ENCODE measurements at regions of chr7 and their contacts with region 1.

Region 1: DNA sequence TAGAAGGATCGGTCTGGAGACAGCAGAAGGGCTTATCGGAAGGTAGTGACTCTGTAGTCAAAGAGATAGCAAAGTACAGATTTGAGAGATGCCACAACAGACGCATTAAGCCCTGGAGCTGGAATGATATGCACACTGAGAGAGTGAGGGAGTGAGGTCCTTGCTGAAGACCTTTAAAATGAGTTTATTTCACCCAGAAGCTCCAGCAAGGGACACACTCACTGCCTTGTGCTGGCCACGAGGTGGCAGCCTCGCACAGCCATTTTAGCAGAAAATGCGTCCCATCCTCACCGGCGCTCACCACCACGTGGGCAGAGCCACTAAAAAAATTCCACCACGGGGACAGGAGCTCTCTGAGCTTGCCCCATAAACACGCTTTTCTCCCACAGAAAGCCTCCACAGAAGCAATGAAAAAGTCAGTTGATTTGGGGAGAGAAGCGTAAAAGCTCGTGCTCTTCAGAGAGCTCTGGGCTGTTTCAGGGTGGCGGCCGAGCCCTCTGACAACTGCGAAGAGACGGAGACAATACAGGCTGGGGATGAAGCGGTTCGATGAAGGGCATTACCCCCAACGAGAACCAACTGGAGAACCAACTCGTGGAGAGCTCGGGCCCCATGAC is 163.0 kb upstream of the KLF14 start:
- DNase-seq: peak; percentile 82
- H3K4me3 Mint-ChIP-seq: no peak overlapping the region
- H3K27ac Mint-ChIP-seq: peak overlapping the region; percentile 83
- H3K4me1 Mint-ChIP-seq: peaks cover 83% of the 10 kb centered on the region
- H3K27me3 Mint-ChIP-seq: no peaks in the 10 kb centered on the region

Region 2: GRCh38 chr7:130822642-130823041 is 74.4 kb before region 1 on chr7:
- CTCF ChIA-PET with region 1: no interaction called
- DNase-seq: no peak
- H3K4me3 Mint-ChIP-seq: no peak overlapping the region
- H3K27ac Mint-ChIP-seq: no peak overlapping the region
- H3K4me1 Mint-ChIP-seq: peaks cover 6% of the 10 kb centered on the region
- H3K27me3 Mint-ChIP-seq: no peaks in the 10 kb centered on the region

Region 3: GRCh38 chr7:130912862-130913631 is 16.0 kb after region 1 on chr7:
- CTCF ChIA-PET with region 1: interaction called, 45 read pairs
- DNase-seq: peak; percentile 89
- H3K4me3 Mint-ChIP-seq: peak overlapping the region; percentile 83
- H3K27ac Mint-ChIP-seq: peak overlapping the region; percentile 95
- H3K4me1 Mint-ChIP-seq: peaks cover 86% of the 10 kb centered on the region
- H3K27me3 Mint-ChIP-seq: no peaks in the 10 kb centered on the region

Region 4: DNA sequence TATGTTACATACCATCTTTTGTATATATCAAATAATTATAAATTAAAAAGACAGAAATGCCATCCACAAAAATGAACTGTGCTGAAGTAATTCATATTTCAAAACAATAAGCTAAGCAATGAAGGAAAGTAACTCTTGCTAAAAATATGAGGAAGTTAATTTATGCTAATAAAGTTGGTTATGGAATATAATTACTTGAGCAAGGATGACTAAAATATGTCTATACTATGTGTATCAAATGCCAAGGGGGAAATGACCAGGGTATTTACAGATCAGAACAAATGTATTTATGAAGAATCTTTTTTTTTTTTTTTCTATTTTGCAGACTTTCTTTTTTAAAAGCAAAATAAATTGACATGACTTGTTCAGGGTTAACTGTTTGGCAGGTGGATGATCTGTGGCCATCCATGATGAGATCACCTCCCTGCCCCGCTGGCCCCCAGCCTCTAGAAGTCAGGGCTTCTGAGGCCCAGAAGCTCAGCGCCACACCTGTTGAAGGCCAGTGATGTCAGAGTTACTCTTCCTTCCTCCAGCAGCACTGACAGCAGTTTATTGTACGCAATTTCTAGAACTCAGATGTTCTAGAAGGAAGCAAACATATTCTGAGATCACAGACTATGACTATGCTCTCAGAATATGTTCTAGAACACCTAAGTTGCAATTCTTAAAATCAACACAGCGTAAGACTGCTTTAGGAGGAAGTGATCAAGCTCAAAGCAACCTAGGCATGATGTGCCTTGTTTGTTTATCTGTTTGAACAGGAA is 33.1 kb after region 1 on chr7:
- CTCF ChIA-PET with region 1: interaction called, 16 read pairs
- DNase-seq: peak; percentile 41
- H3K4me3 Mint-ChIP-seq: no peak overlapping the region
- H3K27ac Mint-ChIP-seq: peak overlapping the region; percentile 84
- H3K4me1 Mint-ChIP-seq: peaks cover 84% of the 10 kb centered on the region
- H3K27me3 Mint-ChIP-seq: no peaks in the 10 kb centered on the region

Region 5: GRCh38 chr7:130951303-130951975 is 54.4 kb after region 1 on chr7:
- CTCF ChIA-PET with region 1: interaction called, 54 read pairs
- DNase-seq: no peak
- H3K4me3 Mint-ChIP-seq: no peak overlapping the region
- H3K27ac Mint-ChIP-seq: no peak overlapping the region
- H3K4me1 Mint-ChIP-seq: peaks cover 62% of the 10 kb centered on the region
- H3K27me3 Mint-ChIP-seq: no peaks in the 10 kb centered on the region

Region 6: DNA sequence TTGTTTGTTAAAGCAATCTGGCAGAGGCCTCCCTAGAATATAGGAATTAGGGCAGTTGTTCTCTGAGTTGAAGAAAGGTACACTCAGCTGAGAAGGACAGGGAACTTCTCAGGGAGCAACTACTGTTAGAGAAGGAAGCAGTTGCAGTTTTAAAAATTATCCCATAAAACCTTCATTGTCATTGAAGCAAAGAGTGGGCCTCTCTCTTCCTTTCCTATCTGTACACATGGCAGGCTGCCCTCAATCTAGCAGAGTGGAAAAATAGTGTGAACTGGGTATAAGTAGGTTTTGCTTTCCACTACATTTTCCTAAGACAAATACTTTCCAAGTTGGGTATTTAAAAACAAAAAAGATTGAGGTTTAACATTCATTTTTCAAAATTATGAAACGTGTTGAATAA is 73.7 kb after region 1 on chr7:
- CTCF ChIA-PET with region 1: interaction called, 12 read pairs
- DNase-seq: no peak
- H3K4me3 Mint-ChIP-seq: no peak overlapping the region
- H3K27ac Mint-ChIP-seq: peak overlapping the region; percentile 40
- H3K4me1 Mint-ChIP-seq: peaks cover 73% of the 10 kb centered on the region
- H3K27me3 Mint-ChIP-seq: no peaks in the 10 kb centered on the region

Region 7: GRCh38 chr7:131007394-131008330 is 110.7 kb after region 1 on chr7:
- CTCF ChIA-PET with region 1: interaction called, 35 read pairs
- DNase-seq: peak; percentile 73
- H3K4me3 Mint-ChIP-seq: peak overlapping the region; percentile 25
- H3K27ac Mint-ChIP-seq: peak overlapping the region; percentile 63
- H3K4me1 Mint-ChIP-seq: peaks cover 73% of the 10 kb centered on the region
- H3K27me3 Mint-ChIP-seq: no peaks in the 10 kb centered on the region

Region 8: DNA sequence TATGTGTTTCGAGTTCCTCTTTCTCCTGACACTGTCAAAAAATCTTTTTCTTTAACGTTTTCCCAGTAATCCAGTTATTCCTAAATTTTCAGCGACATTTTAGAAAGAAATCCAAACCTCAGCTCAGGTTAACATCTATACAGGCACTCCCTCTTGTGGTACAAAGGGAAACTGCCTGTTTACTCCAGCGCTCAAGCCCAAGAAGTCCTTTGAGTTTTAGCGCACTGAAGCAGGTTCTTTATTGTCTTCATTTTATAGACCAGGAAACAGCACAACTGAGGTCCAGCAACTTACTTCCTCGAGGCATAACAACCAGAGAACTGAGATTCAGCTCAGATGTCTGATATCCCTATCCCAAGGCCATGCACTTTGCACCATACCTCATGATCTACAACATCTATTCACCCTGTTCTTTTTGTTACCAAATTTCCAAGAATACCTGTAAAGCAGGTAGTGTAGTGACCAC is 143.5 kb after region 1 on chr7:
- CTCF ChIA-PET with region 1: interaction called, 128 read pairs
- DNase-seq: peak; percentile 68
- H3K4me3 Mint-ChIP-seq: no peak overlapping the region
- H3K27ac Mint-ChIP-seq: peak overlapping the region; percentile 47
- H3K4me1 Mint-ChIP-seq: peaks cover 62% of the 10 kb centered on the region
- H3K27me3 Mint-ChIP-seq: no peaks in the 10 kb centered on the region

Measured in activated naive CD4-positive, alpha-beta T cell treated with anti-CD3 and anti-CD28 coated beads, Interleukin-2, amount 10 ng/mL, durations not matched to agents 7 days and 5 days (primary cell).